Tibial artery (tissue), 4 donors: ENCODE measurements at regions of chr5 and their contacts with region 1.

Region 1: DNA sequence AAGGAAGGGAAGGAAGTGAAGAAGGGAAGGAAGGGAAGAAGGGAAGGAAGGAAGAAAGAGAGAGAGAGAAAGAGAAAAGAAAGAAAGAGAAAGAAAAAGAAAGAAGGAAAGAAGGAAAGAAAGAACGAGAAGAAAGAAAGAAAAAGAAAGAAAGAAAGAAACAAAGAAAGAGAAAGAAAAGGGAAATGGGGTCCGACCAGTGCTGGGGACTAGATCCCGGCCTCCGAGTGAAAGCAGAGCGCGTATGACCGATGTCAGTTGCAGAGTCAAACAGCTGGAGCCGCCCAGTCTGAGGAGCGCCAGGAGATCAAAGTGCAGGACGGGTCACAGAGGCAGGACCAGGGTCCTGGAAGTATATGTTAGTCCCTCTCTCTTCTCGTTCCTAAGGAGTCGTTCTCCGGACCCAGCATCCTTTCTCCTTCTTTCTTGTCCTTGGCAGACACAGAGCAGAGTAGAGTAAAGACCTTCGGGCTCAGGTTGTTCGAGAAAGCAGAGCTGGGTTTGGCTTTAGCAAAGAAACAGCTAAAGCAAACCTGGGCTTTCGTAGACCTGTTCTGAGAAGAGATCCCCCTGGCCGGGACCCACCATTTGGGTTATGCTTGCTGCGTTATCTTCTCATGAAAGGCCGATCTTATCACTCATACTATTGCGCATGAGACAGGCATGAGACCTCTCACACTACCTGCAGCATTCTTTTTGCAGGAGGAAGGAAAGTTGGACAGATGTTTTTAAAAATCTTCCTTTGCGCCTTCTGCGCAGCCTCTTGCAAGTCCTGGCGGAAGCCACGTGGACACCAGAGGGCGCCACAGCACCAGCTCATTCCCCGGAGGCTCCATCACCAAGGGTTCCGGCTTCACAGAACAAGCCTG is 305.2 kb upstream of the MSX2 start:
- DNase-seq: peak; percentile 88 to 91
- H3K4me3 ChIP-seq: peak overlapping the region in 1 of 2 donors; percentile 22
- H3K27ac ChIP-seq: no peak overlapping the region
- H3K4me1 ChIP-seq: peaks cover 0 to 11% (median 3%) of the 10 kb centered on the region in 4 donors
- H3K27me3 ChIP-seq: peaks cover 0 to 32% of the 10 kb centered on the region in 2 donors
- CTCF ChIP-seq: peak; percentile 89 to 92

Region 2: DNA sequence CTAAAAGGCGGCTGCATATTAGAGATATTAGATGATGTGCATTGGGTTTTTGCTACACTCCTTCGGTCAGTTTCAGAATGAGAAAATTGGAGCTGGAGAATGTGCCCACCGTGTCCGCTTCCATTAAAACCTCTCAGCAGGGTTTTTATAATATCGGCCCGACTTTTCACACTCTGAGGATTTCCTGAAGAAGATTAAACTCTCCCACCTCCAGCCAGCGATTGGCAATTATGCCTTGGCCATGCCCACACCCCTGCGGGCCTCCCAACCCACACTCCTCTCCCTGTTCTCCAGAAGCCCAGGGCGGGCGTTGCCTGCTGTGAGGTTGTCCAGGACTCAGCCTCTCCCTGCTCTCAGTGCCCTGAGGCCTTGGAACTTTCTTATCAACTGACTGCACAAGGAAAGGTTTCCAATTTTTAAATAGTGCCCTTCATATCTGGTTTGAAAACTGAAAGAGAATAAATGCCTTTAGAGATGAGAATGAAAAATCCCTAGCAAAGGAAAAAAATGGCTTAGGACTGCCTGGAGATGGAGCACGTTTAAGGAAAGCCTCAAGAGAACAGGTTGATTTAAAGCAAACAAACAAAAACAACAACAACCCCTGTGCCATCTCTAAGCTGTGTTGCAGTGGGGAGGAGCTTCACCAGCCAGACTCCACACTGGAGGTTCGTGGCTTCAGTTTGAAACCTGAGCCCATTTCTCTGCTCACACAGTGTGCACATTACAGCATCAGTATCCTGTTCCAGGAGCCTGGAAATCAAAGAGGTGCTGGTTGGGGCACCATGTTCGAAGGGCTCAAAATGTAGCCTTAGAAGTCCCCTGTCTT is 80.8 kb before region 1 on chr5:
- intact Hi-C with region 1: no loop called
- DNase-seq: no peak
- H3K4me3 ChIP-seq: no peak overlapping the region
- H3K27ac ChIP-seq: no peak overlapping the region
- H3K4me1 ChIP-seq: no peaks in the 10 kb centered on the region
- H3K27me3 ChIP-seq: peaks cover 0 to 30% of the 10 kb centered on the region in 2 donors
- CTCF ChIP-seq: no peak

Region 3: DNA sequence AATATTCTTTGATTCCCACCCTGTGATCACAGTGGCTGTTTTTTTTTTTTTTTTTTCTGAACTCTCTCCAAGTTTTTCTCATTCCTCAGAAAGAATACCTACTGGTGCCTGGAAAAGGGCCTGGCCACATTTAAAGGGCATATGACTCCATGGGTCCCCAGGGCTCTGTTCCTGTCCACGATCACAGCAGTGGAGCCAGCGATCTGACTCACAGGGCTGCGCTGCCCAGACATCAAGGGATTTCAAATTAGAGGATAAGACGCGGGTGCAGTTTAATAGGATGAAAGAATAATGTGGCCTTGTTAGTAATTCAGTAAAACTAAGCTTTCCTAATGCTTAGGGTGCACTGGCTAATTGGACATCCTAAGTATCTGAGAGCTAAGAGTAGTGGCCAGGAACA is 130.1 kb after region 1 on chr5:
- intact Hi-C with region 1: no loop called
- DNase-seq: peak; percentile 49 to 70
- H3K4me3 ChIP-seq: no peak overlapping the region
- H3K27ac ChIP-seq: no peak overlapping the region
- H3K4me1 ChIP-seq: peaks cover 0 to 31% (median 18%) of the 10 kb centered on the region in 4 donors
- H3K27me3 ChIP-seq: no peaks in the 10 kb centered on the region
- CTCF ChIP-seq: no peak

Region 4: GRCh38 chr5:174735498-174736330 is 316.6 kb after region 1 on chr5:
- intact Hi-C with region 1: loop called (anchors 5 kb)
- DNase-seq: no peak
- H3K4me3 ChIP-seq: no peak overlapping the region
- H3K27ac ChIP-seq: no peak overlapping the region
- H3K4me1 ChIP-seq: peaks cover 0 to 10% (median 5%) of the 10 kb centered on the region in 4 donors
- H3K27me3 ChIP-seq: peaks cover 0 to 56% of the 10 kb centered on the region in 2 donors
- CTCF ChIP-seq: peak; percentile 33 to 41